H1 (cell line): ENCODE measurements at regions of chr5 and their contacts with region 1.

Region 1: DNA sequence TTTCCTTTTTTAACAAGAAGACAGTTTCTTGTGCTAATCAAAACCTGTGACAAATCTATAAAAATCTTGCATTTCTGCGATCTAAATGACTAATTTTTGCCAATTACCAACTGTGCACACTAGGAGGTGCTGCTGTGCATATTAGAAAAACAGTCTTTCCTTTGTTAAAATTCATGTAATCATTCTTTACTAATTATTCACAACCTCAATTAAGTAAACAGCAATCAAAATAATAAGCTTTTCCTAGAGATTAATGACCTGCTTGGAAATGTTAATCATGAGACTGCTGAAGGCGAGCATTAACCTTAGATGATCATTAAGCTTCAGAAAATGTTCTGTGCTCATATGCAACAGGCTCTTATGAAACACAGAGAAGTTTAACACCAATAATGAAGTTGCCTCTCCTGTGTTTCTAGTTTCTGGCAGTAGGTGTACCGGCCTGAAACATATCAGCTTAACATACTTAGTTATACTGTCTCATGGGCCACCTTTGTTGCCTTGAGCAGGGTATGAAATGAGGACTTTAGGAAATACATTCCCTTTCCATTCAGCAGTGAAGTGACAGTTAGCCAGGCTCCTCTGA is 17.7 kb downstream of the RFESD start:
- DNase-seq: no peak
- H3K4me3 ChIP-seq: no peak overlapping the region
- H3K27ac ChIP-seq: no peak overlapping the region
- H3K4me1 ChIP-seq: no peaks in the 10 kb centered on the region
- H3K27me3 ChIP-seq: no peaks in the 10 kb centered on the region
- CTCF ChIP-seq: peak in 2 of 3 experiments; percentile 41 to 63; a peak in 2 of 4 replicates
- EP300 ChIP-seq: no peak
- POLR2A ChIP-seq: no peak
- RAD21 ChIP-seq: peak; percentile 55 to 63

Region 2: GRCh38 chr5:95630394-95630917 is 33.8 kb before region 1 on chr5:
- CTCF ChIA-PET with region 1: no interaction called
- POLR2A ChIA-PET with region 1: no interaction called
- DNase-seq: no peak
- H3K4me3 ChIP-seq: no peak overlapping the region
- H3K27ac ChIP-seq: no peak overlapping the region
- H3K4me1 ChIP-seq: no peaks in the 10 kb centered on the region
- H3K27me3 ChIP-seq: no peaks in the 10 kb centered on the region
- CTCF ChIP-seq: no peak
- EP300 ChIP-seq: no peak
- POLR2A ChIP-seq: no peak
- RAD21 ChIP-seq: no peak

Region 3: DNA sequence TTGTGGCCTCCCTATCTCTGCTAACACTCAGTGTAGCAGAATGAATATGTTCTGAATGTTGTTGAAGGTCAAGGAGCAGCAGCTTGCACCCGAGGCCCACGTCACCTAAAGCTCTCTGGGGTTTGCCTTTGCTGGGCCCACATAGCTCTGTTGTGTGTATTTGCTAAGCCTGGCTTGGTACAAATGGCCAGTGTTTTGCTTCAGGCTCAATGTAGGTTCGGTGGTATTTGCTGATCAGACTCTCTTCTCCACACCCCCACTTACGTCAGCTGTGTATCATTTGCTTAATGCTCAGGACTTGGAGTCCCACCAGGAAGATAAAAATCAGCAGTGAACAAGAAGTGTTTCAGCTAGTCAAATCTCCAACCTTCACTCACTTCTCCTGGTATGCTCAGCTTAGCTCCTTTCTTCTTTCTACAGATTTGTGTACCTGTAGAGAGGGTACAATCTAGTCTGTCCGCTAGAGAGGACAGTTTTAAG is 22.5 kb before region 1 on chr5:
- CTCF ChIA-PET with region 1: interaction called, 28 read pairs
- POLR2A ChIA-PET with region 1: no interaction called
- DNase-seq: no peak
- H3K4me3 ChIP-seq: no peak overlapping the region
- H3K27ac ChIP-seq: no peak overlapping the region
- H3K4me1 ChIP-seq: no peaks in the 10 kb centered on the region
- H3K27me3 ChIP-seq: no peaks in the 10 kb centered on the region
- CTCF ChIP-seq: no peak
- EP300 ChIP-seq: no peak
- POLR2A ChIP-seq: no peak
- RAD21 ChIP-seq: no peak

Region 4: DNA sequence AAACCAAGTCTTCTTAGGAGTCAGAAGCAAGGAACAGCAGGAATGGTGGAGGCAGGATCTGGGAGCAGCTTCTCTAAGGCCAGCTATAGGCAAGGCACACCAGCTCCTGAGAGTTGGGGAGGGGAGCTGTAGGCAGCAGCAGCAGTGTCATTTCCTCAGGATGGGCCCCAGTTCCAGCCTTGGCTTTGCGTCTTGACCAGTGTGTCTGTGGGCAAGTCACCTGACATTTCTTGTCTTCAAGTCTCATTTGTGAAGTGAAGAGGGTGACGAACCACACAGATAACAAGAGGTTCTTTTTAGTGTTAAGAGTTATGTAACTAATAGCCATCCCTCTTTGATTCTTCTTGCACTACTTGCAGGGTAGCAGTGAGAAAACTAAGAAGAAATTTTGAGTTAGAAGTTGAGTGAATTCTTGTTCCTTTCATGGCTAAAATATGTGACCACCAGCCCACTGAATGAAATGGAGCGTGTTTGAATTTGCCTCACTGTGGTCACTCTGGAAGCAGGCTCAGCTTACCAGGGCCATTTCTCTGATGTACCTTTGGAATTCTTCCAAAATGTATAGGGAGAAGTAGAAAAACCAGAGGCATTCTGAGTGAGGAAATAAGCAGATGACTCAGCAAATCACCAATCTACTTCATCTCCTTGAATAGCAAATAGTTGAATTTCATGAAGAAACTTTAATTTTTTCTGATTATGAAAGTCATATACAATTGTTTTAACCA is 109.2 kb after region 1 on chr5:
- CTCF ChIA-PET with region 1: interaction called, 16 read pairs
- POLR2A ChIA-PET with region 1: no interaction called
- DNase-seq: no peak
- H3K4me3 ChIP-seq: no peak overlapping the region
- H3K27ac ChIP-seq: no peak overlapping the region
- H3K4me1 ChIP-seq: no peaks in the 10 kb centered on the region
- H3K27me3 ChIP-seq: peaks cover 0 to 1% (median 0%) of the 10 kb centered on the region in 4 experiments; a peak in 1 of 7 replicates
- CTCF ChIP-seq: no peak
- EP300 ChIP-seq: no peak
- POLR2A ChIP-seq: no peak
- RAD21 ChIP-seq: no peak